ENCODE measurements at regions of chr1 and their contacts with region 1.

Region 1: GRCh38 chr1:39666772-39667171 is 5.1 kb downstream of the NT5C1A start:
- DNase-seq: peak; percentile 87
- ATAC-seq: peak; percentile 94
- H3K4me3 Mint-ChIP-seq: no peak overlapping the region
- H3K27ac Mint-ChIP-seq: peak overlapping the region; percentile 53
- H3K4me1 Mint-ChIP-seq: peaks cover 26% of the 10 kb centered on the region
- H3K27me3 Mint-ChIP-seq: peaks cover 27% of the 10 kb centered on the region
- CTCF ChIP-seq: no peak

Region 2: DNA sequence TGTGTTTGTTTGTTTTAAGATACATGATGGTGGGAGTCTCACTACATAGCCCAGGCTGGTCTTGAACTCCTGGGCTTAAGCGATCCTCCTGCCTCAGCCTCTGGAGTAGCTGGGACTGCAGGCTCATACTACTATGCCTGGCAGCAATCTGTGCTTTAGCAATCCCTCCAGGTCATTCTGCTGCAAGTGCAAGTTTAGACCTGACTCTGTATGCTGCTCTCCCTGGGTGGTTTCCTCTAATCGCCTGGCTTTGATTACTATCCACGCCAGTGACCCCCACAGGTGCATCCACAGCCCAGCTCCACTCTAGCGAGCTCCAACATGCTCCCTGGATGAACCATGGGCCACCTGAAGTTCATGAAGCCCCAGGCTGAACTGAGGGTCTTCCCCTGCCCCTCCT is 74.7 kb before region 1 on chr1:
- CTCF ChIA-PET with region 1: no interaction called
- POLR2A ChIA-PET with region 1: no interaction called
- intact Hi-C with region 1: no loop called
- DNase-seq: no peak
- ATAC-seq: no peak
- H3K4me3 Mint-ChIP-seq: no peak overlapping the region
- H3K27ac Mint-ChIP-seq: no peak overlapping the region
- H3K4me1 Mint-ChIP-seq: no peaks in the 10 kb centered on the region
- H3K27me3 Mint-ChIP-seq: peaks cover 5% of the 10 kb centered on the region
- CTCF ChIP-seq: no peak

Region 3: GRCh38 chr1:39639305-39640130 is 27.3 kb before region 1 on chr1 and contains the start of gene HEYL:
- CTCF ChIA-PET with region 1: no interaction called
- POLR2A ChIA-PET with region 1: no interaction called
- intact Hi-C with region 1: no loop called
- DNase-seq: peak; percentile 72
- ATAC-seq: peak; percentile 96
- H3K4me3 Mint-ChIP-seq: peak within 1 kb of the TSS; percentile 48
- H3K27ac Mint-ChIP-seq: no peak within 1 kb of the TSS
- H3K4me1 Mint-ChIP-seq: peaks cover 6% of the 10 kb centered on the region
- H3K27me3 Mint-ChIP-seq: peaks cover 37% of the 10 kb centered on the region
- CTCF ChIP-seq: no peak
- total RNA-seq, gene HEYL: 0.07 TPM in 1 of 2 experiments, not detected in the other

Region 4: DNA sequence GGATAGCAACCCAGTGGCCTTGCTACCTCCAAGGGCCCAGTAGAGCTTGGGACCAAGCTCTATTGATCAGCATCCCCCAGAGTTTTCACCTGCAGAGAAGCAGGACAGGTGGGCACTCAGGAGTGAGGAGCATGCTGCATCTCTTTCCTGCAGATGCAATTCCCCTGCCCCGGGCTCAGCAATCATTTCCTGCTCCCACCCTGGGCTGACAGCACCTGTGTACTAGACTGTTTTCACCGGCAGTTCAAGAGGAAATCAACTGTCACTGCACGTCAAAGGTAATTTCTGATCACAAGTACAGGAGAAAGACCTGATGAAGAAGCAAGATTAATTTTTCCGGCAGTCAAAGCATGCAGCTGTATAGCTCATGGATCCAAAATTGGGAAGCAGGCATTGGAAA is 14.0 kb after region 1 on chr1:
- CTCF ChIA-PET with region 1: interaction called, 31 read pairs
- POLR2A ChIA-PET with region 1: interaction called, 14 read pairs
- intact Hi-C with region 1: no loop called
- DNase-seq: no peak
- ATAC-seq: no peak
- H3K4me3 Mint-ChIP-seq: no peak overlapping the region
- H3K27ac Mint-ChIP-seq: no peak overlapping the region
- H3K4me1 Mint-ChIP-seq: peaks cover 18% of the 10 kb centered on the region
- H3K27me3 Mint-ChIP-seq: peaks cover 11% of the 10 kb centered on the region
- CTCF ChIP-seq: no peak

Region 5: GRCh38 chr1:39720094-39720999 is 53.6 kb after region 1 on chr1:
- CTCF ChIA-PET with region 1: interaction called, 30 read pairs
- POLR2A ChIA-PET with region 1: no interaction called
- intact Hi-C with region 1: loop called (anchors 5 kb)
- DNase-seq: no peak
- ATAC-seq: peak; percentile 56
- H3K4me3 Mint-ChIP-seq: no peak overlapping the region
- H3K27ac Mint-ChIP-seq: no peak overlapping the region
- H3K4me1 Mint-ChIP-seq: no peaks in the 10 kb centered on the region
- H3K27me3 Mint-ChIP-seq: peaks cover 41% of the 10 kb centered on the region
- CTCF ChIP-seq: peak; percentile 61

Region 6: GRCh38 chr1:39745016-39745670 is 78.4 kb after region 1 on chr1:
- CTCF ChIA-PET with region 1: no interaction called
- POLR2A ChIA-PET with region 1: no interaction called
- intact Hi-C with region 1: no loop called
- DNase-seq: no peak
- ATAC-seq: no peak
- H3K4me3 Mint-ChIP-seq: no peak overlapping the region
- H3K27ac Mint-ChIP-seq: no peak overlapping the region
- H3K4me1 Mint-ChIP-seq: peaks cover 20% of the 10 kb centered on the region
- H3K27me3 Mint-ChIP-seq: no peaks in the 10 kb centered on the region
- CTCF ChIP-seq: no peak